ENCODE measurements at regions of chr1 and their contacts with region 1.

Region 1: GRCh38 chr1:27872059-27872801 is at the start of gene THEMIS2:
- DNase-seq: peak; percentile 73
- ATAC-seq: peak; percentile 71
- H3K4me3 Mint-ChIP-seq: peak within 1 kb of the TSS; percentile 97
- H3K27ac Mint-ChIP-seq: peak within 1 kb of the TSS; percentile 80
- H3K4me1 Mint-ChIP-seq: peaks cover 60% of the 10 kb centered on the region
- H3K27me3 Mint-ChIP-seq: no peaks in the 10 kb centered on the region
- CTCF ChIP-seq: no peak
- total RNA-seq, gene THEMIS2: 56.1 and 78.6 TPM in 2 replicates

Region 2: DNA sequence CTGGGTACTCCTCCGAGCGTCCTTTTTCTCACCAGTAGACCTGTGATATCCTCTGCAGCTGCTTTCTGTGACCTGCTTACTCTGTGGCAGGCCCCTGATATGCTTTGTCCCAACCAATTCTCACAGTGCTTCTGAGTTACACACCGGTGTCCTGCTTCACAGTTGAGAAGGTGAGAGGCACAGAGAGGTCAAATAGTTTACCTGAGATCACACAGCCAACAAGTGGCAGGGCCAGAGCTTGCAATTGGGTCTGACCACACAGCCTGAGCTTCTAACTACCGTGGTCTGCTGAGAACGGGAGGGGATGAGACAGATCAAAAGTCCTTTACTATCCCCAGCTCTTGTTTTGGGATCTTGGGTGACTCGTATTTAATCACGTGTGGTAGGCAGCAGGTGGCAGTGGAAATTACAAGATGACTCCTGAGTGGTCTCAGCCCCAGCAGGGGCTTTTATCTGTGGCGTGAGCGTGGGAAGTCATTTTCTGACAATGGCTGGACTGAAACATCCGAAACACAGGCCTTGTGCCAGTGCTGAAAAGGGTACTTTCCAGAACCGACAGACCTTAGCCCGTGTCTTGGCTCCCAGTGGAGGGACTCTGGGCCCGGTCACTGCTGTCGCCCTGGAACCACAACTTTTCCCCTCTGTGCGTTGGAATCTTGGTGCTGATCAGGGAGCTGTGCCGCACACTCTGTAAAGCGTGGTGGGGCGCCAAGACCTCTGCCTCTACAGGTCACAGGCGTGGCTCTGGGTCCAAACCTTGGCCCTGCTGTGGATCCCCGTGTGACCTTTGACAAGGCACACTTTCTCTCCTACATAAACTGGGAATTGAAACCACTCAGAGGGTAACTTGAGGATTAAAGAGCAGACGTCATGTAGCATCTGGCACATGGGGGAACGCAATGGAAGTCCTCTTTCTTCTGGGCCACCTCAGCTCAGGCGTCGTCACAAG is 12.1 kb after region 1 on chr1:
- CTCF ChIA-PET with region 1: interaction called, 3 read pairs
- POLR2A ChIA-PET with region 1: interaction called, 30 read pairs
- intact Hi-C with region 1: loop called (anchors 1 kb)
- DNase-seq: no peak
- ATAC-seq: peak; percentile 60
- H3K4me3 Mint-ChIP-seq: peak overlapping the region; percentile 68
- H3K27ac Mint-ChIP-seq: peak overlapping the region; percentile 77
- H3K4me1 Mint-ChIP-seq: peaks cover 56% of the 10 kb centered on the region
- H3K27me3 Mint-ChIP-seq: no peaks in the 10 kb centered on the region
- CTCF ChIP-seq: no peak

Region 3: DNA sequence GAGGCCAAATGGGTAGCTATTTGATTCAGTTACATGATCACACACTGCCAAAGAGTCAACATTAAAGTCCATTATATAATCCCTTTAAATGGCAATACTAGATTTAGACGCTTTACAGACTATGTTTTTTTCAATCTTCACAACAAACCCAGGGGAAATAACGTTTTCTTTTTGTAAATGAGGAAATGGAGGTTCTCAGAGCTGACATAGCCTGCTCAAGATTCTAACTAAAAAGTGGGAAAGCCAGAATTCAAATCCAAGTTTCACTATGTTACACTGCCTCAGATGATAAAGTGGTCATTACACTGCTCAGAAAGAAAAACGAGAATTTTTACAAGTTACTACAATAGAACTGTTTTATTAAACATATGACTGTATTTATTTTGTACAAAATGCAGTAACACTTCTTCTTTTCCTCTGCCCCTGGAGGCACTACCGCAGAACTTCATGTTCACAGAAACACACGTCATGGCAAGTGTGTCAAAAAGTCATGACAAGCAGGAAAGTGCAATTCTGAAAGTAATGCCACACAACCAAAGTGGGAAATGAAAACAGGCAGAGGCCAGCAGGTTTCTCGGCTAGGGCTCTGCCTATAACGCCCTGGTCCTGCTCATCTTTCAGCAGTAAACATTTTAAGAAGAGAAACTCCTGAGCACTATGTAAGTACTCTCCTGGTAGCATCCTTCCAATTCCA is 19.1 kb after region 1 on chr1:
- CTCF ChIA-PET with region 1: interaction called, 6 read pairs
- POLR2A ChIA-PET with region 1: interaction called, 55 read pairs
- intact Hi-C with region 1: loop called (anchors 1 kb)
- DNase-seq: no peak
- ATAC-seq: peak; percentile 76
- H3K4me3 Mint-ChIP-seq: peak overlapping the region; percentile 50
- H3K27ac Mint-ChIP-seq: peak overlapping the region; percentile 89
- H3K4me1 Mint-ChIP-seq: peaks cover 57% of the 10 kb centered on the region
- H3K27me3 Mint-ChIP-seq: no peaks in the 10 kb centered on the region
- CTCF ChIP-seq: no peak

Region 4: GRCh38 chr1:28199328-28200233 is 327.4 kb after region 1 on chr1:
- CTCF ChIA-PET with region 1: no interaction called
- POLR2A ChIA-PET with region 1: no interaction called
- intact Hi-C with region 1: no loop called
- DNase-seq: no peak
- ATAC-seq: peak; percentile 80
- H3K4me3 Mint-ChIP-seq: no peak overlapping the region
- H3K27ac Mint-ChIP-seq: peak overlapping the region; percentile 80
- H3K4me1 Mint-ChIP-seq: peaks cover 22% of the 10 kb centered on the region
- H3K27me3 Mint-ChIP-seq: no peaks in the 10 kb centered on the region
- CTCF ChIP-seq: no peak